ENCODE measurements at regions of chr22 and their contacts with region 1.

Region 1: DNA sequence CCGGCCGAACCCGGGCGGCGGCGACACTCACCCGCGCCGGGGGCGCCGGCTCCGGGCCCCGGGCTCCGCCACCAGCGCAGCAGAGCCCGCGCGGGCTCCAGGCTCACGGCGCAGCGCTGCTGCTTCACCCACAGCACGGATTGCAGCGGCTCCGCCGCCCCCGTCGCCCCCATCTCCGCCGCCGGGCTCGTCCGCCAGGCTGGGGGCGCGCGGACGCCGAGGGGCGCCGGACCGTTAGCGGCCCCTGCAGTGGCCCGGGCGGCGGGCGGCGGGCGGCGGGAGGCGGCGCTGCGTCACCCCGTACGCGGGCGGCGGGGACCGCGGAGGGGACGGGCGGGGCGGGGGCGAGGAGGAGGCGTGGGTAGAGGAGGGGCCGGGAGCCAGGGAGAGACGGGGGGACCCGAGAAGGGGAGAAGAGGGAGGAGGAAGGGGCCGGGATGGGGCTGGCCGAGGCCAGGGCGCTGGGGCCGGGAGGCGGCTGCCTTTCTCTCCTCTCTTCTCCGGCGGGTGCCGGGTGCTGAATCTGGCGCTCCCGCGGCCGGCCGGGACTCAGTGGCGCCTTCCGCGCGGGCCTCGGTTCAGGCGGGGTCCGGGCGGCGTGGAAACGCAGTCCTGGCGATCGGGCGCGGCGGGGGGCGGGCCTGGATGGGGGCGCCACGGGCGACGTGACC is at the start of gene CERK:
- DNase-seq: no peak
- ATAC-seq: peak; percentile 81
- H3K4me3 ChIP-seq: peak within 1 kb of the TSS; percentile 67 to 68
- H3K27ac ChIP-seq: peak within 1 kb of the TSS; percentile 76
- H3K4me1 ChIP-seq: peaks cover 46% of the 10 kb centered on the region
- H3K27me3 ChIP-seq: no peaks in the 10 kb centered on the region
- CTCF ChIP-seq: no peak
- total RNA-seq, gene CERK: 30.9 TPM

Region 2: GRCh38 chr22:46748908-46749675 is 11.0 kb after region 1 on chr22:
- CTCF ChIA-PET with region 1: no interaction called
- POLR2A ChIA-PET with region 1: no interaction called
- in situ Hi-C with region 1: no loop called
- intact Hi-C with region 1: no loop called
- DNase-seq: no peak
- ATAC-seq: no peak
- H3K4me3 ChIP-seq: no peak overlapping the region
- H3K27ac ChIP-seq: no peak overlapping the region
- H3K4me1 ChIP-seq: peaks cover 10% of the 10 kb centered on the region
- H3K27me3 ChIP-seq: no peaks in the 10 kb centered on the region
- CTCF ChIP-seq: no peak

Region 3: DNA sequence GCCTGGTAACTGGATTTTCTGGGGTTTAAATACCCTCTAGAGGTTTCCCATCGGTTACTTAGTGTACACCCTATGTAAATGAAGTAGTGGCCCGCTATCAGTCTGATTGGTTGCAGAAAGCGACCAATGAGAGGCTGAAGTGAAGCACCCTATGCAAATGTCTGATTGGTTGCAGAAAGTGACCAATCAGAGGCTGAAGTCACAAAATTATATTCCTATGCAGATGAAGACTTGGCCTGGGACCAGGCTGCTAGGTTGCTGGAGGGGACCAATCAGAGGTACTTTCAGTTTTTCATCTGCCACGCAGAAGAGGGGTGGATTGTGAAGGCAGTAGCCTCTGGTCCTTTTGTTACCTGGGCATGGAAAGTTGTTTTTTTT is 159.1 kb after region 1 on chr22:
- CTCF ChIA-PET with region 1: no interaction called
- POLR2A ChIA-PET with region 1: interaction called, 12 read pairs
- in situ Hi-C with region 1: no loop called
- intact Hi-C with region 1: no loop called
- DNase-seq: no peak
- ATAC-seq: no peak
- H3K4me3 ChIP-seq: no peak overlapping the region
- H3K27ac ChIP-seq: no peak overlapping the region
- H3K4me1 ChIP-seq: no peaks in the 10 kb centered on the region
- H3K27me3 ChIP-seq: no peaks in the 10 kb centered on the region
- CTCF ChIP-seq: no peak